ENCODE measurements at regions of chr4 and their contacts with region 1.

Region 1: GRCh38 chr4:25159884-25160713 is at the start of gene SEPSECS:
- DNase-seq: peak; percentile 96
- H3K4me3 Mint-ChIP-seq: peak within 1 kb of the TSS; percentile 90
- H3K27ac Mint-ChIP-seq: peak within 1 kb of the TSS; percentile 99
- H3K4me1 Mint-ChIP-seq: peaks cover 39% of the 10 kb centered on the region
- H3K27me3 Mint-ChIP-seq: peaks cover 1% of the 10 kb centered on the region
- total RNA-seq, gene SEPSECS: 12.8 to 13.3 TPM

Region 2: DNA sequence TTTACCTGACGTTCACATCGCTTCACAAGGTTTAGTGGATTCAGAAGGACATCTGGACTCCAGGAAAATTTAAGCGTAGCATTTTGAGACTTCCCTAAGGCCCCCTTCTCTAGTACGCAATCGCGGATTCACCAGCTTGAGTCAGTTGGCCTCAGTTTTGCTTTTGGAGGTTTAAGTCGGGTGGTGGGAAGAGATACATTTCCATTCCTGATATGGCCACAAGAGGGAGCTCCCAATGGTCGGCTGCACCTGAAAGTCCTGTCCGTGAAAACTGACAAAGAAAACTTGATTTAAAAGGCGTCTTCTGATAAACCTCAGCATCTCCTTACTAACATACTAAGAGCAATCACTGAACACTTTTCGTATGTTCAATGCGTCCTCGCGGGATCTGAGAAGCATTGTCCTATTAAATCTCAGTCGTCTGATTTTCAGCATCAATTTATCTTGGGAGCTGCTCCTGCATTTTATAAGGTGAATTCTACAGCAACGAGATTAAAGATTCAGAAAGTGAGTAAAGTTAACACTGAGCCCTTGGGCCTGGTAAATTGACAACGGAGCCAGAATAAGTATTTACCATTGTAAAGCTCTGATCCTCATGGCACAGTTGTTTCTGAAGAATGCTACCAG is 179.9 kb before region 1 on chr4:
- CTCF ChIA-PET with region 1: interaction called, 12 read pairs
- POLR2A ChIA-PET with region 1: no interaction called
- intact Hi-C with region 1: no loop called
- DNase-seq: peak; percentile 61
- H3K4me3 Mint-ChIP-seq: no peak overlapping the region
- H3K27ac Mint-ChIP-seq: no peak overlapping the region
- H3K4me1 Mint-ChIP-seq: peaks cover 5% of the 10 kb centered on the region
- H3K27me3 Mint-ChIP-seq: peaks cover 17% of the 10 kb centered on the region

Region 3: DNA sequence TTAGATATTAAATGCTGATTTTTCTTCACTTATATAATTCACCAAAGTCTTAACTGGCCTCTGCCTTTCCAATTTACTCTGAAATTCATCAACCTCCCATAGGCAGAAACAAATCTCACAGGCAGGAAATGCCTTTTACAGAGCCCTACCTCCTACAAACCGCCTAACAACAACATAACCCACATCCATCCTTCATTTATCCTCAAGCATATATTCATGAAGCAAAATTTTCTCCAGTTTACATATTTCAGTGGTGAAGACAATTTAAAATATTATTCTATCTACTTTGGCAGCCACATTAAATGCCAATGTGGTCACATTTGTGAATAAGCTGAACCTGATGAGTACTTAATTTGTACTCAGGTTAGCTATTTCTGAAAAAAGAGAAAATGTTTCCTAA is 30.2 kb before region 1 on chr4:
- CTCF ChIA-PET with region 1: no interaction called
- POLR2A ChIA-PET with region 1: no interaction called
- intact Hi-C with region 1: no loop called
- DNase-seq: no peak
- H3K4me3 Mint-ChIP-seq: no peak overlapping the region
- H3K27ac Mint-ChIP-seq: no peak overlapping the region
- H3K4me1 Mint-ChIP-seq: peaks cover 3% of the 10 kb centered on the region
- H3K27me3 Mint-ChIP-seq: no peaks in the 10 kb centered on the region

Region 4: DNA sequence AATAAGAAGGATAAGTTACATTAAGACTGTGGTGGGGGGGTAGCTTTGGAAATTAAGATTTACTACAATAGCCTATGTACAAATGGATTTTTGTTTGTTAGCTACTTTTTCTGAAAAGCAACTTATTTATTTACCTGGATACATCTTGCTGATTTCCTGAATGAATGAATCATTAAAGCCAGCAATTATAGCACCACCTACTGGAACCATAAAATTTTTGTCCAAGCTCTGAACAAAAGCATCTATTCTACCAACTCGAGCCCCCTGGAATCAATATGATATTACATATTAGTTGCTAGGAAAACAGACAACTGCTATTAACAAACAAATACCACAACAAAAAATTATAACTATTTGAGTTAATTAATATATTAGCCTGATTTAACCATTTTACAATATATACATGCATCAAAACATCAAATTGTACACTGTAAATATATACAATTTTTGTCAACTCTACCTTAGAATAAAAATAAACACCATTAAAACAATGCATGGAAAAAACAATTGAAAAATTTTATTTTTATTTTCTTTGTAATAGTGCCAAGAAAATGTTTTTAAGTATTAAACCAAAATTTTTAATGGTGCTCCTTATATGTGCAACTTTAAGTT is 15.1 kb before region 1 on chr4:
- CTCF ChIA-PET with region 1: interaction called, 18 read pairs
- POLR2A ChIA-PET with region 1: no interaction called
- intact Hi-C with region 1: no loop called
- DNase-seq: no peak
- H3K4me3 Mint-ChIP-seq: no peak overlapping the region
- H3K27ac Mint-ChIP-seq: no peak overlapping the region
- H3K4me1 Mint-ChIP-seq: no peaks in the 10 kb centered on the region
- H3K27me3 Mint-ChIP-seq: no peaks in the 10 kb centered on the region

Region 5: DNA sequence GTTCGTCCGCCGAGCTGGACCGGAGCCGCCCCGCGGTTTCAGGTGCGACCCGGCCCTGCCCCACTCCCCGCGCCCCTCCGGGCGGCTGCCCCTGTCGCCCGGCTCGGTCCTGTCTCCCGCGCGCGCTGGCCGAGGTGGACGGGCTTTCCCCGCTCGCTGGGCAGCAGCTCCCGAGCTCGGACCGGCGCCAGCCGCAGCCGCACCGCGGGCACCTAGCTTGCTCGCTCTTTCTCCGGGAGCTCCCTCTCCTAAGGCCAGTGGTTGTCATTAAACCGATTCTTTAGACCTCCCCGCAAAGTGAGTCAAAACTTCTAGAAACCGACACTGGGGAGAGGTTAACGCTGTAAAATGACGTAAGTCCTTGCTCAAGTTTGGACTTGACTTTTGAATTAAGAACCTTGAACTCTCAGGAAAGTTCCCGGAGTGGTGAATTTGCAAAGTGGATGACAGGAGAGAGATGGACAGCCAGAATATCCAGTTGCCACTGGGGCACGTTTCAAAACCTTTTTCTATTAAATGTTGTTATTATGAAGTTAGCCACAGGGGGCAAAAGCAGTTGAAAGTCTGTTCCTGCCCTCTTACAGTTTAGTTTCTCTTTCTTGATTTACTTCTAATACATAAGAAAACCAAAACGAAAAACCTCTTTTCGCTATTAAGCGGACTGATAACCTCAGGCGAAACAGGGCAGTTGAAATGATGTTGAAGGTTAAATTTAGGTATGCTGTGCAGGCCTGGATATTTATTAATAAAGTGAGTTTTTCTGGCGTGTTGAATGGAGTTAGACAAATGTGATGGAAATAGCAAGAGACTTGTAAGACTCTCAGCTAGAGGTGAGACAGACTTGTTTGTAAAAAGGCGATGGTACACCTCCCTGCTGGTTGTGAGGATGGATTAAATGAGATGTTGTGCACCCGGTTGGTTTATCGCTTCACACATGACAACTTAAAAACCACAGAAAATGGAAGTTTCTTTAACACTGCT is 74.6 kb after region 1 on chr4:
- CTCF ChIA-PET with region 1: interaction called, 13 read pairs
- POLR2A ChIA-PET with region 1: interaction called, 56 read pairs
- intact Hi-C with region 1: loop called (anchors 1 kb)
- DNase-seq: peak; percentile 59
- H3K4me3 Mint-ChIP-seq: peak overlapping the region; percentile 93
- H3K27ac Mint-ChIP-seq: peak overlapping the region; percentile 94
- H3K4me1 Mint-ChIP-seq: peaks cover 51% of the 10 kb centered on the region
- H3K27me3 Mint-ChIP-seq: no peaks in the 10 kb centered on the region

Region 6: GRCh38 chr4:25367004-25367621 is 207.0 kb after region 1 on chr4:
- CTCF ChIA-PET with region 1: interaction called, 23 read pairs
- POLR2A ChIA-PET with region 1: no interaction called
- intact Hi-C with region 1: no loop called
- DNase-seq: no peak
- H3K4me3 Mint-ChIP-seq: no peak overlapping the region
- H3K27ac Mint-ChIP-seq: no peak overlapping the region
- H3K4me1 Mint-ChIP-seq: no peaks in the 10 kb centered on the region
- H3K27me3 Mint-ChIP-seq: no peaks in the 10 kb centered on the region